ENCODE measurements at regions of chr2 and their contacts with region 1.

Region 1: GRCh38 chr2:233053928-233054784 is 6.0 kb upstream of the INPP5D start:
- DNase-seq: peak in 4 of 5 donors; percentile 50 to 66 (median 54)
- H3K4me3 ChIP-seq: no peak overlapping the region
- H3K4me3 Mint-ChIP-seq: peak overlapping the region in 3 of 8 donors; percentile 26 to 42 (median 26)
- H3K27ac ChIP-seq: no peak overlapping the region
- H3K27ac Mint-ChIP-seq: peak overlapping the region in 5 of 7 donors; percentile 29 to 71 (median 63)
- H3K4me1 ChIP-seq: peaks cover 11% of the 10 kb centered on the region
- H3K4me1 Mint-ChIP-seq: peaks cover 9 to 31% (median 17%) of the 10 kb centered on the region in 4 donors
- H3K27me3 ChIP-seq: no peaks in the 10 kb centered on the region
- H3K27me3 Mint-ChIP-seq: peaks cover 0 to 1% of the 10 kb centered on the region in 2 donors

Region 2: GRCh38 chr2:232611551-232612218 is 442.5 kb before region 1 on chr2:
- CTCF ChIA-PET with region 1: no interaction called
- POLR2A ChIA-PET with region 1: no interaction called
- intact Hi-C with region 1: loop called (anchors 10 kb)
- DNase-seq: peak; percentile 42 to 58 (median 47)
- H3K4me3 ChIP-seq: no peak overlapping the region
- H3K4me3 Mint-ChIP-seq: no peak overlapping the region
- H3K27ac ChIP-seq: no peak overlapping the region
- H3K27ac Mint-ChIP-seq: no peak overlapping the region
- H3K4me1 ChIP-seq: no peaks in the 10 kb centered on the region
- H3K4me1 Mint-ChIP-seq: peaks cover 0 to 2% (median 0%) of the 10 kb centered on the region in 4 donors
- H3K27me3 ChIP-seq: no peaks in the 10 kb centered on the region
- H3K27me3 Mint-ChIP-seq: peaks cover 0 to 3% of the 10 kb centered on the region in 2 donors

Region 3: DNA sequence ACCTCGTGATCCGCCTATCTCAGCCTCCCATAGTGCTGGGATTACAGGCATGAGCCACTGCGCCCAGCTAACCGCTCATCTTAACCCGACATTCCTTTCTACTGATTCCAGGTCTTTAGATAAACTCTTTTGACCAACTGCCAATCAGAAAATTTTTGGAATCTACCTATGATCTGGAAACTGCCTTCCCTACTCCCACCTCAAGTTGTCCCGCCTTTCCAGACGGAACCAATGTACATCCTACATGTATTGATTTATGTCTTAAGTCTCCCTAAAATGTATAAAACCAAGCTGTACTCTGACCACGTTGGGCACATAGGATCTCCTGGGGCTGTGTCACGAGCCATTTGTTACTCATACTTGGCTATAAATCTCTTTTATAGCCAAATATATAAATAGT is 24.8 kb before region 1 on chr2:
- CTCF ChIA-PET with region 1: interaction called, 29 read pairs
- POLR2A ChIA-PET with region 1: no interaction called
- intact Hi-C with region 1: no loop called
- DNase-seq: no peak
- H3K4me3 ChIP-seq: no peak overlapping the region
- H3K4me3 Mint-ChIP-seq: no peak overlapping the region
- H3K27ac ChIP-seq: no peak overlapping the region
- H3K27ac Mint-ChIP-seq: peak overlapping the region in 1 of 7 donors; percentile 20
- H3K4me1 ChIP-seq: no peaks in the 10 kb centered on the region
- H3K4me1 Mint-ChIP-seq: no peaks in the 10 kb centered on the region
- H3K27me3 ChIP-seq: no peaks in the 10 kb centered on the region
- H3K27me3 Mint-ChIP-seq: no peaks in the 10 kb centered on the region

Region 4: DNA sequence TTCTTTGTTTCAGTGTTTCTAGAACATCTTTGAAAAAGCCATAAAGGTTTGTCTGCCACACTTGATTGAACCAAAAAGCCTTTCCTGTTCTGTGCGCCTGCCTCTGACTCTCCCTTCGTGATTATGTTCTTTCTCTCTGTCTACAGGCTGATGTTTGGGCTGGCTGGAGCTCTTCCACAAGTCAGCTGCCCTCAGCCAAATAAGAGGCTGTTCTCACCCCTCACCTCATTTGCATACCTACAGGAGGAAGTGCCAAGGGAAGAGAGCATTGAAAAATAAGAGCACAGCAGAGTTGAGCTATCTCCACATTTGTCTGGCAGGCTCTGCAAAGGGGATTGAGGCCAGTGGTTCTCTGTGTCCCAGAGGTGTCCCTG is 21.8 kb after region 1 on chr2:
- CTCF ChIA-PET with region 1: interaction called, 39 read pairs
- POLR2A ChIA-PET with region 1: interaction called, 426 read pairs
- intact Hi-C with region 1: no loop called
- DNase-seq: peak; percentile 45 to 69 (median 50)
- H3K4me3 ChIP-seq: peak overlapping the region; percentile 9 to 41
- H3K4me3 Mint-ChIP-seq: no peak overlapping the region
- H3K27ac ChIP-seq: peak overlapping the region; percentile 44
- H3K27ac Mint-ChIP-seq: no peak overlapping the region
- H3K4me1 ChIP-seq: peaks cover 92% of the 10 kb centered on the region
- H3K4me1 Mint-ChIP-seq: peaks cover 37 to 42% (median 41%) of the 10 kb centered on the region in 4 donors
- H3K27me3 ChIP-seq: no peaks in the 10 kb centered on the region
- H3K27me3 Mint-ChIP-seq: peaks cover 0 to 1% of the 10 kb centered on the region in 2 donors

Region 5: GRCh38 chr2:233092432-233093165 is 38.4 kb after region 1 on chr2:
- CTCF ChIA-PET with region 1: interaction called, 63 read pairs
- POLR2A ChIA-PET with region 1: interaction called, 426 read pairs
- intact Hi-C with region 1: no loop called
- DNase-seq: no peak
- H3K4me3 ChIP-seq: no peak overlapping the region
- H3K4me3 Mint-ChIP-seq: peak overlapping the region in 2 of 8 donors; percentile 14 to 16
- H3K27ac ChIP-seq: no peak overlapping the region
- H3K27ac Mint-ChIP-seq: peak overlapping the region in 6 of 7 donors; percentile 70 to 86 (median 75)
- H3K4me1 ChIP-seq: peaks cover 58% of the 10 kb centered on the region
- H3K4me1 Mint-ChIP-seq: peaks cover 44 to 87% (median 66%) of the 10 kb centered on the region in 4 donors
- H3K27me3 ChIP-seq: no peaks in the 10 kb centered on the region
- H3K27me3 Mint-ChIP-seq: no peaks in the 10 kb centered on the region

Region 6: DNA sequence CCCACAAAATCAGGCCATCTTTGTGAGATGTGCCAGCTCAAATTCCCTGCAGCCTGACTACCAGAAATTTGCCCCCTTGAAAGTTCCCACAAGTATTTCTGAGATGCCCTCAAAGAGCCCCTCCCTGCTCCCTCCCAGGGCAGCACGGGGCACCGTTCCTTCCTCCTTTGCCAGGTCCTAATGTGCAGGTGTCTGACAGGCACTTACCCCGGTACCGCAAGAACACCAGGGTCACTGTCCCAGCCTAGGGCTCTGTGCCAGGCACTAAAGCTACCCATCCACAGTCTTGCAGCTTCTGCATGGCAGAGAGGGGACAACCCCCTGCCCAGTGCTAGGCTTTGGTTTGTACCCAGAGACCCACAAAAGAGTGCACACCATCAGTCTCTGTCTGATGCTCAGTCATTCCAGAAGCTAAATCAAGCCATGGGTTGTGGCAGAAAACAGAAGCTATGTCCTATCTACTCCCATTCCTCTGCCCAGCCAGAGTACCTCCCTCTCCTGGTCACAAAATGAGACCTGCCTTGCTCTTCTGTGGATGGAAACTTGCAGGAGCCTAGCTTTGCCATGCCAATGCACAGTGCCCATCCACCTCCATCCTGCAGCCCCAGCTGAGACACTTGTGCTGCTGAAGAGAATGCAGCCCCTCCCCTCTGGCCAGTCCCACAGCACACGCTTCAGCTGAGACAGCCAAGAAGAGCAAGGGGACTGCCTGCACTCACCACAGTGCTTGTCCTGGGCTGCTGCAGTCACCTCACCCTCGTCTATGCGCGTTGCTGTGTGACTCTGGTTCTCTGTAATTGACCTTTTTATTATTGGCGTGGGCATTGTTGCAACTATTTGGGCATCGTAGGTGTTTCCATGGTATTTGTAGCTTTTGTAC is 54.7 kb after region 1 on chr2:
- CTCF ChIA-PET with region 1: interaction called, 24 read pairs
- POLR2A ChIA-PET with region 1: no interaction called
- intact Hi-C with region 1: no loop called
- DNase-seq: no peak
- H3K4me3 ChIP-seq: no peak overlapping the region
- H3K4me3 Mint-ChIP-seq: peak overlapping the region in 5 of 8 donors; percentile 25 to 62 (median 30)
- H3K27ac ChIP-seq: no peak overlapping the region
- H3K27ac Mint-ChIP-seq: peak overlapping the region; percentile 67 to 89 (median 81)
- H3K4me1 ChIP-seq: peaks cover 61% of the 10 kb centered on the region
- H3K4me1 Mint-ChIP-seq: peaks cover 53 to 90% (median 70%) of the 10 kb centered on the region in 4 donors
- H3K27me3 ChIP-seq: no peaks in the 10 kb centered on the region
- H3K27me3 Mint-ChIP-seq: no peaks in the 10 kb centered on the region

Region 7: DNA sequence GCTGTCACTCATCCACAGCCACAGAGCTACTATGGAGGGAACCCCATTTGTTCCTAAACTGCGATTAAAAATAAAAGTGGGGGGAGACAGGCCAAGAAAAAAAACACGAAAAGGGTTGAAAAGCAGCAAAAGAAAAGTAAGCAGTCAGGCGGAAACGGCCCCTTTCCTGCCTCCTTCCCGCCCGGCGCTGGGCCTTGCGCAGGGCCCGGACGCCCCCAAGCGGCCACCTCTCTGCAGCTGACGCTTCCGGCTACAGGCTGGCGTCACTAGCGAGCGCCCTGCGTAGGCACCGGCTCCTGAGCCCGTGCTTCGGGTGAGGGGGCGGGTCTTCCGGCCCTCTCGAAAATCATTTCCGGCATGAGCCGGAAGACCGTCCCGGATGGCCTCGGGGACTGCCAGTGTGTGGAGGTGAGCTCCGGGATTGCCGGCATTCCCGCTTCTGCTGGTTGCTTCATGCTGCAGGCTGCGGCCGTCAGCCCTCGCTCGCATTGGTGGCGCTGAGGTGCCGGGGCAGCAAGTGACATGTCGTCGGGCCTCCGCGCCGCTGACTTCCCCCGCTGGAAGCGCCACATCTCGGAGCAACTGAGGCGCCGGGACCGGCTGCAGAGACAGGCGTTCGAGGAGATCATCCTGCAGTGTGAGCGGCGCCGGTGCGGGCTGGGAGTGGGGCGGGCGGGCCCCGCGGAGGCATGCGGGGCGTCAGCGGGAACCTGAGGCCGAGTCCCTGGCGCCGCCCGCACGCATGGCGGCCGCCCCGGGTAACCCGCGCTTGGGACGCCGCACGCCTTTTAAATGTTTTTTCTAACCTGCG is 197.4 kb after region 1 on chr2 and contains the start of gene ATG16L1:
- CTCF ChIA-PET with region 1: interaction called, 36 read pairs
- POLR2A ChIA-PET with region 1: interaction called, 28 read pairs
- intact Hi-C with region 1: no loop called
- DNase-seq: peak; percentile 93 to 96 (median 95)
- H3K4me3 ChIP-seq: peak within 1 kb of the TSS; percentile 96 to 98
- H3K4me3 Mint-ChIP-seq: peak within 1 kb of the TSS; percentile 90 to 94 (median 93)
- H3K27ac ChIP-seq: peak within 1 kb of the TSS; percentile 89
- H3K27ac Mint-ChIP-seq: peak within 1 kb of the TSS; percentile 94 to 98 (median 98)
- H3K4me1 ChIP-seq: peaks cover 84% of the 10 kb centered on the region
- H3K4me1 Mint-ChIP-seq: peaks cover 57 to 83% (median 68%) of the 10 kb centered on the region in 4 donors
- H3K27me3 ChIP-seq: no peaks in the 10 kb centered on the region
- H3K27me3 Mint-ChIP-seq: no peaks in the 10 kb centered on the region
- total RNA-seq, gene ATG16L1: 81.1 to 89.4 TPM